GM12878 (cell line): ENCODE measurements at regions of chr5 and their contacts with region 1.

Region 1: GRCh38 chr5:180831139-180832048 is 28.8 kb upstream of the MGAT1 start:
- DNase-seq: no peak
- ATAC-seq: peak; percentile 90
- H3K4me3 ChIP-seq: peak overlapping the region; percentile 89
- H3K27ac ChIP-seq: peak overlapping the region; percentile 96
- H3K4me1 ChIP-seq: peaks cover 12% of the 10 kb centered on the region; the same call in 1 of the 2 replicates
- H3K27me3 ChIP-seq: no peaks in the 10 kb centered on the region
- CTCF ChIP-seq: 0 out of 6 replicates have a peak, but pooled peaks of 1 of the 3 experiments have one; percentile 5
- EP300 ChIP-seq: no peak
- POLR2A ChIP-seq: peak; percentile 67
- RAD21 ChIP-seq: no peak

Region 2: GRCh38 chr5:180636403-180637075 is 194.9 kb before region 1 on chr5:
- CTCF ChIA-PET with region 1: no interaction called
- POLR2A ChIA-PET with region 1: no interaction called
- RAD21 ChIA-PET with region 1: no interaction called
- SMC1A ChIA-PET with region 1: no interaction called
- in situ Hi-C with region 1: no loop called
- intact Hi-C with region 1: no loop called
- DNase-seq: no peak
- ATAC-seq: no peak
- H3K4me3 ChIP-seq: no peak overlapping the region
- H3K27ac ChIP-seq: no peak overlapping the region
- H3K4me1 ChIP-seq: no peaks in the 10 kb centered on the region
- H3K27me3 ChIP-seq: no peaks in the 10 kb centered on the region
- CTCF ChIP-seq: no peak
- EP300 ChIP-seq: no peak
- POLR2A ChIP-seq: no peak
- RAD21 ChIP-seq: no peak

Region 3: DNA sequence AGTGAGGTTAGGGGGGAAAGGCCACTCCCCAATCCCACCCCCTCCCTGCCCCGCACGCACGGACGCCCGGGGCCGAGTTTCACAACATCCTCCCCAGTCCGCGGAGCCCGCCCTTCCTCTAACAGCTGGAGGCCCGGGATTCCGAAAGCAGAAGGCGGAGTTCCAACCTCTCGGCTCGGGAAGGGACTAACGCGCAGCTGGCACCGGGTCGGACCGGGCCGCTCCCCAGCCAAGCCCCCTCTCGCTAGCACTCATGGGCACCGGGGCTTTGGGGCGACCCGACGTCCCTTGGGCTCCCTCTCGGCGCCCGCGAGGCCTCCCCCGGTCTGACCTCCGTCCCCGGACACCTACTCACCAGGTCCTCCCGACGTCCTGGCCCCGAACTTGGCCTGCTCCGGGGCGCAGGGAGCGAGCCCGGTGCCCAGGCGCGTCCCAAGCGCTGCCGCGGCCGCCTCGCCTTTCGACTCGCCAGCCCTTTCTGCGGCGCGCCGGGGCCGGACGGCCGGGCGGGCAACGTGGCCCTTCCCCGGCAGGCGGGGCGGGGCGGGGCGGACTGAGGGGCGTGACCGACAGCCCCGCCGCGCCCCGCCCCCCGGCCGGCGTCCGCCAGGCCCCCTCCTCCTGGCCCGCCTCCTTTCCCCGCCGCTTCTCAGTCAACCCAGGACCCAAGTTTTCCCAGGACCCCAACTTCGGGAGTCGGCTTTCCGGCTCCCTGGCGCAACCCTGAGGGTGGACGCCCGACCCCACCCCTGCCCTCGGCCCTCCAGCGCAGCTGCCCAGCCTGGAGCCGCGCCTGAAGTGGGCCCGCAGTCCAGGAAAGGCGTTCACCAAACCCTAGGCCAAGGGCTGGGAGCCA is 28.8 kb before region 1 on chr5 and contains the start of gene MGAT1:
- CTCF ChIA-PET with region 1: interaction called, 16 read pairs
- POLR2A ChIA-PET with region 1: interaction called, 31 read pairs
- RAD21 ChIA-PET with region 1: interaction called, 23 read pairs
- SMC1A ChIA-PET with region 1: interaction called, 26 read pairs
- in situ Hi-C with region 1: no loop called
- intact Hi-C with region 1: no loop called
- DNase-seq: no peak
- ATAC-seq: peak; percentile 72
- H3K4me3 ChIP-seq: peak within 1 kb of the TSS; percentile 97
- H3K27ac ChIP-seq: peak within 1 kb of the TSS; percentile 94
- H3K4me1 ChIP-seq: peaks cover 43% of the 10 kb centered on the region
- H3K27me3 ChIP-seq: no peaks in the 10 kb centered on the region
- CTCF ChIP-seq: no peak
- EP300 ChIP-seq: no peak
- POLR2A ChIP-seq: peak; percentile 89
- RAD21 ChIP-seq: no peak
- polyA plus RNA-seq, gene MGAT1: 3.1 to 7.7 TPM

Region 4: DNA sequence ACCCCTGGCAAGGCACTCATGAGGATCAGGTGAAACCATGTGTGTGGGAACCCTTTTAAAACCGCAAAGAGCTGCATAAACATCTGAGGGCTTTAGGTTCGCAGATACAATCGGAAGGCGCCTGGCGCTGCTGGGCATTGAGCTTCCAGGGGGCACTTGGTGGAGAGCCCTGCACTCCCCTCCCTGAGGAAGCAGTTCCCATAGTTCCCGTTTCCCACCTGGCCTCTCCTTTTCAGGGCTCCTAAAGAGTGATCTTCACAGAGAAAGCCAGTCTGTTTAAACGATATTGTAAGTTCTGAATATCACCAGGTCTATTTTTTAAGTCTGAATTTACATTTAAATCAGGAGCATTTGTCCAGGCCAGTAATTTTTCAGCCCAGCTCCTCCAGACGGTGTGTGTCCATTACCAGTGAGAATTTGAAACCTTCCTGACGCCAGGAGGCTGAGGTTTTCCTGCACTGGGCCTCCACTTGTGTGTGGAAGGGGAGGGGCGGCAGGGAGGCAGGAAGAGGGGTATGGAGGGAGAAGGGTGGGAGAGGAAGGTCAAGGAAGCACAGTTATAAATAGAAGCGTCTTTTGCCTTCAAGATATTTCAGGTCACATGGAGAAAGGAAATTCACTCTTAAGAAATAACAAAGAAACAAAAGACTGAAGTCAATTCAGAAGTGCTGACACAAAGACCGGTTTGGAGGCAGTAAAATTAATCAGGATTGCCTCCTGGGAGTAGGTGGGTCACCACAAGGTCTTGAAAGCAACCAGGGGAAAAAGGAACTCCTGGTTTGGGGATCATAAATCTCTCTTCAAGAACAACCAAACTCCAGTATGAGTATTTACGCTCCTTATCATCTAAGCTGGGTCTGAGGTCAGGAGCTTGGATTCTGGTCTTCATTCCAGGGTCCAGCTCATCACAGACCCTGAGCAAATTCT is 14.5 kb before region 1 on chr5:
- CTCF ChIA-PET with region 1: interaction called, 10 read pairs
- POLR2A ChIA-PET with region 1: interaction called, 41 read pairs
- RAD21 ChIA-PET with region 1: interaction called, 70 read pairs
- SMC1A ChIA-PET with region 1: interaction called, 28 read pairs
- in situ Hi-C with region 1: no loop called
- intact Hi-C with region 1: no loop called
- DNase-seq: no peak
- ATAC-seq: no peak
- H3K4me3 ChIP-seq: peak overlapping the region; percentile 40; the same call in 1 of the 2 replicates
- H3K27ac ChIP-seq: peak overlapping the region; percentile 28
- H3K4me1 ChIP-seq: peaks cover 64% of the 10 kb centered on the region
- H3K27me3 ChIP-seq: no peaks in the 10 kb centered on the region
- CTCF ChIP-seq: no peak
- EP300 ChIP-seq: no peak
- POLR2A ChIP-seq: 0 out of 2 replicates have a peak, but pooled peaks have one; percentile 34
- RAD21 ChIP-seq: no peak

Region 5: DNA sequence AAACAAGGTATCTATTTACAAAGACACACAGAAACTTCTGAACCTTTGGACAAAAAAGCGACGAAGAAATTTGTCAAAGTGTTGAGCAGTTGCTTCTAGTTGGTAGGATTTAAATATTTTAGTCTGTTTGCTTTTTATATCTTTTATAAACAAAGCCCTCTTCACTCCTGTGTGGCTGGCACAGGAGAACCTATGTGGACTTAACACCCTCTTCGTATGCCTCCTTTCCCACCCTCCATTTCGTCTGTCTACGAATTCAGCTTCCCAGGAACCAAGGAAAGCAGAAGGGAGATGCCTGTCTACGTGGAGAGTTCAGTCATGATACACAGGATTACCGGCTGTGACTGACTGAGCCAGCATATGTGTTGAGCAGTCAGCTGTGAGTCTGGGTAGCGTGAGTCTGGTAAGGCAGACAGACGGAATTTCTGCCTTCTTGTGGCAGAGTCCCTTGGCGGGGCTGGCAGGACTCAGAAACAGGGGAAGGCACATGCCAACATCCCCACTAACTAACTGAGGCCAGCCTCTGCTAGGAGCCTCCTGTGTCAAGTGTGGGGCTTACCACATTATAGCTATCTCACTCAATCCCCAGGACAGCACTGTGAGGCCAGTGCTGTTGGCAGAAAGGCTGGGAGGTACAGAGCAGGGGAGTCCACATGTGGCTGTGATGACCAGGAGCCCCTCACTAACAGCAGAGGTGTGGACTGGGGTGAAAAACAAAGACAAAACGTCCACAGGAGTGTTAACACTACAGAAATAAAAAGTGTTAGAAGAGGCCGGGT is 43.6 kb after region 1 on chr5:
- CTCF ChIA-PET with region 1: no interaction called
- POLR2A ChIA-PET with region 1: no interaction called
- RAD21 ChIA-PET with region 1: no interaction called
- SMC1A ChIA-PET with region 1: no interaction called
- in situ Hi-C with region 1: no loop called
- intact Hi-C with region 1: no loop called
- DNase-seq: no peak
- ATAC-seq: no peak
- H3K4me3 ChIP-seq: no peak overlapping the region
- H3K27ac ChIP-seq: no peak overlapping the region
- H3K4me1 ChIP-seq: peaks cover 9% of the 10 kb centered on the region
- H3K27me3 ChIP-seq: no peaks in the 10 kb centered on the region
- CTCF ChIP-seq: no peak
- EP300 ChIP-seq: no peak
- POLR2A ChIP-seq: no peak
- RAD21 ChIP-seq: no peak

Region 6: DNA sequence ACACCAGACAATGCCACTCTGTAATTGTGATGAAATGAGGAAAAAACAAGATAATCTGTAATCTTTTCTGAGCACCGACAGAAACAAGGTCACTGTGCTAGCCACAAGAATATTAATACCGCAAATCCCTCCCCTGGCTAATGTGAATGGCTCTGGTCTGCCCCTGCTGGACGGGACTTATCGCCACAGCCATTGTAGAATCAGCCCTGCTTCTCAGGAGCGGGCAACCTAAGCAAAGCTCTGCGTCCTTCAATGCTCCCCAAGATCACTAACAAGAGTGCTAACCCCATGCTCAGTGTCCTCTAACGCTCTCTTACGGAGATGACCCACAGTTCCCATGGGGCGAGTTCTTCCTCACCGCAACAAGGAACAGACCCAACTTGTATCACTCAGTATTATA is 256.9 kb after region 1 on chr5:
- CTCF ChIA-PET with region 1: no interaction called
- POLR2A ChIA-PET with region 1: no interaction called
- RAD21 ChIA-PET with region 1: no interaction called
- SMC1A ChIA-PET with region 1: no interaction called
- in situ Hi-C with region 1: no loop called
- intact Hi-C with region 1: no loop called
- DNase-seq: no peak
- ATAC-seq: peak; percentile 51; the same call in 2 of the 3 replicates
- H3K4me3 ChIP-seq: no peak overlapping the region
- H3K27ac ChIP-seq: no peak overlapping the region
- H3K4me1 ChIP-seq: no peaks in the 10 kb centered on the region
- H3K27me3 ChIP-seq: peaks cover 0 to 4% of the 10 kb centered on the region in 2 experiments; a peak in 2 of 4 replicates
- CTCF ChIP-seq: peak; percentile 20 to 45 (median 35); a peak in 5 of 6 replicates
- EP300 ChIP-seq: no peak
- POLR2A ChIP-seq: no peak
- RAD21 ChIP-seq: 0 out of 2 replicates have a peak, but pooled peaks have one; percentile 25

Region 7: GRCh38 chr5:181223058-181223728 is 391.8 kb after region 1 on chr5 and contains the start of gene TRIM41:
- CTCF ChIA-PET with region 1: no interaction called
- POLR2A ChIA-PET with region 1: no interaction called
- RAD21 ChIA-PET with region 1: no interaction called
- SMC1A ChIA-PET with region 1: no interaction called
- in situ Hi-C with region 1: no loop called
- intact Hi-C with region 1: no loop called
- DNase-seq: peak; percentile 94
- ATAC-seq: peak; percentile 77
- H3K4me3 ChIP-seq: peak within 1 kb of the TSS; percentile 98
- H3K27ac ChIP-seq: peak within 1 kb of the TSS; percentile 95
- H3K4me1 ChIP-seq: peaks cover 20% of the 10 kb centered on the region
- H3K27me3 ChIP-seq: no peaks in the 10 kb centered on the region
- CTCF ChIP-seq: peak in 1 of 3 experiments; percentile 12; a peak in 1 of 6 replicates
- EP300 ChIP-seq: no peak
- POLR2A ChIP-seq: peak; percentile 98
- RAD21 ChIP-seq: no peak
- polyA plus RNA-seq, gene TRIM41: 1.0 to 3.2 TPM